Ovary (tissue), 10 donors: ENCODE measurements at regions of chr15 and their contacts with region 1.

Region 1: GRCh38 chr15:85730001-85730820 is 64.5 kb downstream of the KLHL25 start:
- DNase-seq: peak in 1 of 5 donors; percentile 58
- H3K4me3 ChIP-seq: no peak overlapping the region
- H3K27ac ChIP-seq: no peak overlapping the region
- H3K4me1 ChIP-seq: peaks cover 6% of the 10 kb centered on the region
- H3K27me3 ChIP-seq: no peaks in the 10 kb centered on the region
- CTCF ChIP-seq: peak; percentile 55 to 79 (median 66)
- EP300 ChIP-seq: no peak
- POLR2A ChIP-seq: no peak

Region 2: GRCh38 chr15:85485956-85486567 is 244.1 kb before region 1 on chr15:
- intact Hi-C with region 1: loop called in 1 of 4 experiments (anchors 10 kb)
- DNase-seq: peak in 3 of 5 donors; percentile 23 to 72 (median 36)
- H3K4me3 ChIP-seq: no peak overlapping the region
- H3K27ac ChIP-seq: no peak overlapping the region
- H3K4me1 ChIP-seq: no peaks in the 10 kb centered on the region
- H3K27me3 ChIP-seq: no peaks in the 10 kb centered on the region
- CTCF ChIP-seq: peak; percentile 61 to 74 (median 67)
- EP300 ChIP-seq: no peak
- POLR2A ChIP-seq: no peak

Region 3: GRCh38 chr15:85831415-85832113 is 101.4 kb after region 1 on chr15:
- intact Hi-C with region 1: loop called in 3 of 4 experiments (anchors 2 to 5 kb)
- DNase-seq: peak; percentile 69 to 82 (median 77)
- H3K4me3 ChIP-seq: no peak overlapping the region
- H3K27ac ChIP-seq: no peak overlapping the region
- H3K4me1 ChIP-seq: no peaks in the 10 kb centered on the region
- H3K27me3 ChIP-seq: no peaks in the 10 kb centered on the region
- CTCF ChIP-seq: peak; percentile 49 to 75 (median 52)
- EP300 ChIP-seq: no peak
- POLR2A ChIP-seq: no peak

Region 4: DNA sequence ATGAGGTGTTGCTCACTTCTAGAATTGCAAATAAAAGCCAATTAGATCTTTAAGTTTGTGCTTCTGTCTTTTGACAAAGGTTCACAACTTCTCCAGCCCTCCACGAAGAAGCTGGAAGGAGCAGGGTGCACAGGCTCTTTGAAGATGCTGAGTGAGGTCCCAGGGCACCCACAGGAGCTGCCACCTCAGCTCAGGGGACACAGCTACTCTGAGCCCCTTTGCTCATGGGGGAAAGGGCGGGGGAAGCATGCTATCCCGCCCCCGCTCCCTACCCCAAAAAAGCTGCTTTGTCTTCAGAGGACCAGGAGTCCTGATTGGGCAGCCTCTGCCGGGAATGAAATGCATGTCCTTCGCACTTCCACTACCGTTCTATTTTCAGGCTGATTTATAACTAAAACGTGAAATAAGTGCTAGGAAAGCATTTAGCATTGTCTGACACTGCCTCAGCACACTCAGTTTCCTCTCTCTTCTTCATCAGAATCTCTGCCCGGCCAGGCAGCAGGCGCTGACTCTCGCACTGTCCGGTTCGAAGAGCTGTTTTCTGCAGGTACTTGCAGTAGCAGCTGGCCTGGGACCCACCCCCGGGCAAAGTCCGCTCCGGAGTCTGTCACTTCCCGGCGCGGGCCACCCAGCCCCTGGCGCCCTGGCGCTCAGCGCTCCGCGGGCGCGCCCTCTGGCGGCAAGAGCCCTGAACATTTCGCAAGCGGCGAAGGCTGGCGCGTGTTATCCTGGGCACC is 110.0 kb after region 1 on chr15:
- intact Hi-C with region 1: loop called in 1 of 4 experiments (anchors 2 kb)
- DNase-seq: peak; percentile 71 to 87 (median 76)
- H3K4me3 ChIP-seq: peak overlapping the region; percentile 11
- H3K27ac ChIP-seq: no peak overlapping the region
- H3K4me1 ChIP-seq: no peaks in the 10 kb centered on the region
- H3K27me3 ChIP-seq: no peaks in the 10 kb centered on the region
- CTCF ChIP-seq: peak; percentile 77 to 88 (median 86)
- EP300 ChIP-seq: no peak
- POLR2A ChIP-seq: no peak

Region 5: DNA sequence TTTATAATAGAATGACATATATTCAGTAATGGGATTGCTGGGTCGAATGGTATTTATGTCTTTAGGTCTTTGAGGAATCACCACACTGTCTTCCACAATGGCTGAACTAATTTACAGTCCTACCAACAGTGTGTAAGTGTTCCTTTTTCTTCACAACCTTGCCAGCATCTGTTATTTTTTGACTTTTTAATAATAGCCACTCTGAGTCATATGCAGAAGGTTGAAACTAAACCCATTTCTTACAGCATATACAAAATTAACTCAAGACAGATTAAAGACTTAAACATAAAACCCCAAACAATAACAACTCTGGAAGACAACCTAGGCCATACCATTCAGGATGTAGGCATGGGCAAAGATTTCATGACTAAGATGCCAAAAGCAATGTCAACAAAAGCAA is 1020.9 kb after region 1 on chr15:
- intact Hi-C with region 1: no loop called
- DNase-seq: no peak
- H3K4me3 ChIP-seq: no peak overlapping the region
- H3K27ac ChIP-seq: no peak overlapping the region
- H3K4me1 ChIP-seq: no peaks in the 10 kb centered on the region
- H3K27me3 ChIP-seq: no peaks in the 10 kb centered on the region
- CTCF ChIP-seq: no peak
- EP300 ChIP-seq: no peak
- POLR2A ChIP-seq: no peak